GM23248 (cell line): ENCODE measurements at regions of chr2 and their contacts with region 1.

Region 1: DNA sequence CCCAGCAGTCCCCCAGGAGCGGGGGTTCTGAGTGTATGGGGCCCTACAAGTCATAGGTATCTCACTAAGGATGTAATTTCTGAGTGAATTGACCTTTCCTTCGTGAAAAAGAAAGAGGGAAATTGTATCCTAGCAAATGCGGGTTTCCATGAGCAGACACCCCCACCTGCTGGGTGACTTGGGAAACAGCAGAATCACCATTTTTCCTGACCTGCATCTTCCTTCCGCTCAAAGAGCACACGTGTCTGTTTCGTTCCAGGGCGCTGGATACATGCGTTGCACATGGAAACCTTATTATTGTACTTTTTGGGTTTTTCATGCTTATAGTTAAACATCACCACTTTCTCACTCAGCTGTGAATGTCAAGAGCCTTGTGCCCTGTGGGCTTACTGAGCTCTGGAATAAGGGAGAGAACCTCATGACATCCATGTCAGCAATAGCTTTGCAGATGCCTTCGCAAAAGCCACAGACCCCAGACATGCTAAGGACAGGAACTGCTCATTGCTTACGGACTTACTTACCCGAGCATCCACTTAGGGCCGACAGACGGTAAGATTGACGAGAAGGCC is 132.8 kb downstream of the TPO start:
- DNase-seq: peak; percentile 78
- H3K4me3 ChIP-seq: no peak overlapping the region
- H3K27ac ChIP-seq: no peak overlapping the region
- H3K4me1 ChIP-seq: no peaks in the 10 kb centered on the region
- H3K27me3 ChIP-seq: no peaks in the 10 kb centered on the region

Region 2: GRCh38 chr2:677056-677965 is 868.8 kb before region 1 on chr2 and contains the start of gene TMEM18:
- in situ Hi-C with region 1: loop called (anchors 25 kb)
- DNase-seq: peak; percentile 100
- H3K4me3 ChIP-seq: peak within 1 kb of the TSS; percentile 88
- H3K27ac ChIP-seq: peak within 1 kb of the TSS; percentile 93
- H3K4me1 ChIP-seq: peaks cover 21% of the 10 kb centered on the region
- H3K27me3 ChIP-seq: no peaks in the 10 kb centered on the region
- total RNA-seq, gene TMEM18: 9.9 and 16.2 TPM in 2 replicates

Region 3: GRCh38 chr2:854460-854859 is 691.6 kb before region 1 on chr2:
- in situ Hi-C with region 1: loop called (anchors 25 kb)
- DNase-seq: peak; percentile 44
- H3K4me3 ChIP-seq: no peak overlapping the region
- H3K27ac ChIP-seq: no peak overlapping the region
- H3K4me1 ChIP-seq: no peaks in the 10 kb centered on the region
- H3K27me3 ChIP-seq: 0 out of 2 replicates have a peak, but pooled peaks cover 3% of the 10 kb centered on the region